Cardiac septum (tissue), 1 donor: ENCODE measurements at regions of chr2 and their contacts with region 1.

Region 1: GRCh38 chr2:54455563-54456361 is at the start of gene SPTBN1:
- DNase-seq: peak; percentile 94
- total RNA-seq, gene SPTBN1: 554 TPM

Region 2: GRCh38 chr2:53886406-53887280 is 569.1 kb before region 1 on chr2:
- intact Hi-C with region 1: no loop called
- DNase-seq: no peak

Region 3: GRCh38 chr2:54115284-54116137 is 340.3 kb before region 1 on chr2 and contains the start of gene ACYP2:
- intact Hi-C with region 1: loop called (anchors 2 kb)
- DNase-seq: peak; percentile 98
- total RNA-seq, gene ACYP2: 86.1 TPM

Region 4: DNA sequence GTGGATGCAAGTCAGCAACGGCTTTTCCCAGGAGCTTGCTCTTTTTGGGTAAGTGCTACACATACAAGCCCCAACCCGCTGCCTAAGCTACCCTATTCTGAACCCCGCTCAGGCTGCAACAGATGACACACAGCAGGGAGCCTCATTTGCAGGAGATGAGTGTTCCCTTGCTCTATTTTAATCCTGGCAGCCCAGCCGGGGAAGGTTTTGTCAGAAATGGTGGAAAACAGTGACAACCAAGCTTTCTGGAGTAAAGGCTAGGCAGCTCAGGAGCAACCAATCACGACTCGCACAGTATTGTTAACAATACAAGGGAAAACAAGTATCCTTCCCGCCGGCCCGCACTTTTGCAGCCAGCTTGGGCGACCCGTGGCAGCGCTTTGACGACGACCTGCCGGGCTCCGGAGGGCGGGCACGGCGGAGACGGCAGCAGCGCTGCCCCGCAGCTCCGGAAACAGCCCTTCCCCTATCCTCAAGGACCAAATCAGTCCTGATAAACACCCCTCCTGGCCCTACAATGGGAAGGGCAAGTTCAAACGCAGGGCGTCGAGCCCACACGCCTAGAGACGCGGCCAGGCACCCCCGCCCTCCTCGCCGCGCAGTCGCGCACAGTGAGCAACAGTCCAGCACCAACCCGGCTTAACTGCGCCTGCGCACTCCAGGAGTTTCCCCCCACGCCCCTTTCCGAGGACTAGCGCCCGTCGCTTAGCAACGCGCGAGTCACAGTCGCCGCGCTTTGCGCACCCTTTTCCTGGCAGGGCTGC is 125.4 kb before region 1 on chr2:
- intact Hi-C with region 1: loop called (anchors 2 kb)
- DNase-seq: peak; percentile 98

Region 5: GRCh38 chr2:54416166-54416813 is 39.5 kb before region 1 on chr2:
- intact Hi-C with region 1: loop called (anchors 5 kb)
- DNase-seq: no peak

Region 6: DNA sequence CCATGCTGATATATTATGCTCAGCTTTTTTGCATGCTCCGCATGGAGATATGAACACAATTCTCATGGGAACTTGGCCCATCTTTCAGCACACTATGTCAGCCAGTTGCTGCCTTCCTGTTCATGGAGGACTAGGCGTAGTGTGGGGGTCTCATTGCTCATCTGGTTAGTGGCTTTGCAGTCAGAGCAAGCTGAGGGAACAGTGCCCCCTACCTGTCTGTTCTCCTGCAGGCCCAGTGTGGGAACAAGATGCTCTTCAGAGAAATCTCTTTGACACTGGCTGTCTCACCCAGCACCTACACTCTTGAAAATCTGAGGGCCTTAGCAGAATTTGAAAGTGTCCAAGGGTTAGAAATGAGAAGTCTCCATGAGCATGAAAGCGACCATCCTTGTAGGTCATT is 47.4 kb after region 1 on chr2:
- intact Hi-C with region 1: loop called (anchors 5 kb)
- DNase-seq: no peak